ENCODE measurements at regions of chr5 and their contacts with region 1.

Region 1: DNA sequence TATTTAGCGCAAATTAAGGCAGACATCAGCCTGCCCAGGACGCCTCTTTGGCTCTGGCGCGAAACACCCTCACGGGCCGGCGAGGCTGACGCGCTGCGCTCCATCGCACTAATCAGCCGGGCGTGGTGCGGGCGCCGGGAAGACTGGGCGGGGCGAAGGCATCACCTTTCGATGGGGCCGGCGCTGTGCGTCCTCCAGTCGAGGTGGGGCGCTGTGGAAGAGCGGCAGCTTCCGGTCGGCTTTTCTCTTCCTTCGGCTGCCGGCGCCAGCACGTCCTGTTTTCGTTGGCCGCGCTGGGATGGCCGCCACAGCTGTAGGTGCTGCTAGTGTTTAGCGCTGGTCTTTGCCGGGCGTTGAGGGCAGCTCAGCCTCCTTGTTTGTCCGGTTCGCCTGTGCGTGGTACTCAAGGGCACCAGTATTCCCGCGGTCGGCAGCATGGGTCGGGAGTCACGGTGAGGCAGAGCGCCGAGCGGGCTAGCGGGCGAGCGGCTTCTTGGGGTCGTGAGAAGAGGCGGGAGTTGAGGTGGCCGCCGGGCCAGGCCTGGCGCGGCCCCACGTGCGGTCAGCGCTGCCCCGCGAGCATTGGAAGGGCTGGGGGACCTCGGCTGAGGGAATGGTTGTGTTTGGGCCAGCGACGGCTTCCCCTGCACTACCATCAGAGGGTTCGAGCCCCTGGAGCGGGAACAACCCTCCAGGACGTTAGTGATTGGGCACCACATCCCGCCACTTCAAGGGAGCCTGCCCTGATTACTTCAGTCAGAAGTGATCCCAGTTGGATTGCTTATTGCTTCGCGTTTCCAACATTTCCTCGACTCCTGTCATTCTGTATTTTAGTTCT is at the start of gene DDX46:
- DNase-seq: peak; percentile 81 to 96 (median 91)
- H3K4me3 ChIP-seq: peak within 1 kb of the TSS; percentile 68 to 99 (median 90)
- H3K27ac ChIP-seq: peak within 1 kb of the TSS in 51 of 59 donors; percentile 10 to 86 (median 70)
- H3K27me3 ChIP-seq: no peaks in the 10 kb centered on the region
- CTCF ChIP-seq: peak; percentile 77 to 97 (median 89)
- total RNA-seq, gene DDX46: 39.7 to 84.6 (median 56.9) TPM

Region 2: DNA sequence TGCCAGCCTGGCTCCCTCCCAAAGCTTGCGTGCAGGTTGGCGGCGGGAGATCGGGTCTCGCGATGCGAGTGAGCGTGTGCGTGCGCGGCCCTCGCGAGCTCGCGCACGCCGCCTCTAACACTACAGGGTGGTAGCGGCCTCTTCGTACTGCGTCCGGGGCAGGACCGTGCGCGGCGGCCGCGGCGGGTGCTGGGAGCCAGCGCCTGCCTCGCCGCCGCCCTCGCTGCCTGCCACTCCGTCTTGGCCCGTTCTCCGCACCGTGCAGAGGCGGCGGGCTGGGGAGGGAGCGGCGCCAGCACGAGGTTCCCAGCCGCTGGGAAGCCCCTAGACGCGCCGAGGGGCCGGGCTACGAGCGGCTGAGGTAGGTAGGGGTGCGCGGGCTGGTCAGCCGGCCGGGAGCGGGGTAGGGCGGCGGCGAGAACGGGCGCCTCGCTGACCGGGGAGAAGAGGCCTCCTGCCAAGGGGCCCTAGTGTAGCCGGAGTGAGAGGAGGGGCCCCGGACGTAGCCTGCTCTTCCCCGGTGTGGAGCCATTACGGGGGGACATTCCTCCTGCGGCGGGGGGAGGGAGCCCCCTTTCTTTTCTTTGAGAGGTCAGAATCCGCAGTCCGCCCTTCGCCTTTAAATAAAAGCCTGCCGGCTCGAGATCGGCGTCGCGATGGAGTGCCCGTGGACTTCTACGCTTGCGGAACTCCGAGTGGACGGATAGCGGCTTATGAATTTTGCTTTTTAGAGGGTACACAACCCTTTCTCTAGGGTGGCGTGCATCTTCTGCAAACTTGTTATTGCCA is 87.3 kb after region 1 on chr5 and contains the start of gene C5orf24:
- intact Hi-C with region 1: loop called (anchors 2 to 5 kb)
- DNase-seq: peak; percentile 89 to 96 (median 94)
- H3K4me3 ChIP-seq: peak within 1 kb of the TSS; percentile 61 to 99 (median 92)
- H3K27ac ChIP-seq: peak within 1 kb of the TSS; percentile 74 to 98 (median 95)
- H3K27me3 ChIP-seq: no peaks in the 10 kb centered on the region
- CTCF ChIP-seq: peak in 38 of 56 donors; percentile 11 to 64 (median 33)
- total RNA-seq, gene C5orf24: 38.2 to 79.3 (median 56.7) TPM